ENCODE measurements at regions of chr22 and their contacts with region 1.

Region 1: DNA sequence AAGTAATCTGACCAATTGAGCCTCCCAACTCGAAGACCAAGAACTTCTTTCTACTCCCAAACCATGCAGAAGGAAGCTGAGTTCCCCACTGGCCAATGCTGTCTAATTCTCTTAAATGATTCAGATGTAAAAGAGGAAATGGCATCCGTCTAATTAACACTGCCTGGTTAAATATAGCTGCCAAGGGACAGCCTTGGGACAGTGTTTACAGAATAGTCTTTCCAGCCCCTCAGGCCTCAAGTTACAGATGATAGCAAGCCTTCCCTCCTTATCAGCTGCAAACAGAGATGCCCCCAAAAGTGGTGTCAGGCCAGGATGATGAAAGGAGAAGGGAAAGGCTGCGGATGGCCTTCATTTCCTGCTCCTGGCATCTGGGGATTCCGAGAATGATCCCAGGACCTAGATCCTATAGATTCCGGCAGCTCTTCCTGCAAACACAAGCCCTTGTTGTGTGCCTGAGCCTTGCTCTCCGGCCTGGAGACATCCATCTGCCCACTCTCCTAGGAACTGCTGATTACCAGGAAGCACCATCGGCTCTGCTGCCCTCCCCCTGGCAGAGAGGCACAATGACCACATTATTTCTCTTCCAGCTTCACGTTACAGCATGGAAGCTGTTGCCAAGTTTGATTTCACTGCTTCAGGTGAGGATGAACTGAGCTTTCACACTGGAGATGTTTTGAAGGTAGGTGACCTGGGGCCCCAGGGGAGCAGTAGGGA is 13.5 kb upstream of the TMA7B start:
- DNase-seq: no peak
- ATAC-seq: peak; percentile 49
- H3K4me3 ChIP-seq: peak overlapping the region; percentile 26
- H3K4me3 Mint-ChIP-seq: peak overlapping the region in 9 of 10 donors; percentile 65 to 82 (median 78)
- H3K27ac ChIP-seq: peak overlapping the region; percentile 79
- H3K27ac Mint-ChIP-seq: peak overlapping the region in 5 of 9 donors; percentile 77 to 98 (median 98)
- H3K4me1 ChIP-seq: peaks cover 81 to 99% of the 10 kb centered on the region in 2 donors
- H3K4me1 Mint-ChIP-seq: peaks cover 78 to 100% (median 96%) of the 10 kb centered on the region in 7 donors
- H3K27me3 ChIP-seq: no peaks in the 10 kb centered on the region
- H3K27me3 Mint-ChIP-seq: no peaks in the 10 kb centered on the region

Region 2: DNA sequence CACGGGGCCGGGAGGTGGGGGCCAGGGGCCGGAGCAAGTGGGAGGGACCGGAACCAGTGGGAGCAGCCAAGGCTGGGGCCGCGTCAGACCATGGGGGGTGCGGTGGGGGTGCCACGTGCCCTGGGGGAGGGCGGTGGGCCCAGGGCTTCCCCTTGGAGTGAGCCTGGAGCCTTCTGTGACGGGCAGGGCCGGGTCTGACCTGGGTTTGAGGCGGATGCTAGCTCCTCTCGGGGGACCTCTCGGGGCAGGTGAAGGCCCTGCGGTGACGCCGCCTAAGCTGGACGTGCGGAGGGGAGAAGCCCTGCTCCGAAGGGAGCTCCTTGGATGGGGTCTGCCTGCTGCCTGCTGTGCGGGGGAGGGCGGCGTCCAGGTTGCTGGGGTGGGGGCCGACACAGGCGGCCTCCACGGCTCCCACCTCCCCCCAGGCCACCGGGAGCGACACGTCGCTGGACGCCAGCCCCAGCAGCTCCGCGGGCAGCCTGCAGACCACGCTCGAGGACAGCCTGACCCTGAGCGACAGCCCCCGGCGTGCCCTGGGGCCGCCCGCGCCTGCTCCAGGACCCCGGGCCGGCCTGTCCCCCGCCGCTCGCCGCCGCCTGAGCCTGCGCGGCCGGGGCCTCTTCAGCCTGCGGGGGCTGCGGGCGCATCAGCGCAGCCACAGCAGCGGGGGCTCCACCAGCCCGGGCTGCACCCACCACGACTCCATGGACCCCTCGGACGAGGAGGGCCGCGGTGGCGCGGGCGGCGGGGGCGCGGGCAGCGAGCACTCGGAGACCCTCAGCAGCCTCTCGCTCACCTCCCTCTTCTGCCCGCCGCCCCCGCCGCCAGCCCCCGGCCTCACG is 261.1 kb before region 1 on chr22:
- CTCF ChIA-PET with region 1: no interaction called
- POLR2A ChIA-PET with region 1: no interaction called
- intact Hi-C with region 1: loop called in 1 of 2 experiments (anchors 10 kb)
- DNase-seq: no peak
- ATAC-seq: no peak
- H3K4me3 ChIP-seq: no peak overlapping the region
- H3K4me3 Mint-ChIP-seq: peak overlapping the region in 1 of 10 donors; percentile 33
- H3K27ac ChIP-seq: no peak overlapping the region
- H3K27ac Mint-ChIP-seq: no peak overlapping the region
- H3K4me1 ChIP-seq: no peaks in the 10 kb centered on the region
- H3K4me1 Mint-ChIP-seq: peaks cover 0 to 12% (median 5%) of the 10 kb centered on the region in 7 donors
- H3K27me3 ChIP-seq: no peaks in the 10 kb centered on the region
- H3K27me3 Mint-ChIP-seq: peaks cover 0 to 44% (median 5%) of the 10 kb centered on the region in 5 donors

Region 3: DNA sequence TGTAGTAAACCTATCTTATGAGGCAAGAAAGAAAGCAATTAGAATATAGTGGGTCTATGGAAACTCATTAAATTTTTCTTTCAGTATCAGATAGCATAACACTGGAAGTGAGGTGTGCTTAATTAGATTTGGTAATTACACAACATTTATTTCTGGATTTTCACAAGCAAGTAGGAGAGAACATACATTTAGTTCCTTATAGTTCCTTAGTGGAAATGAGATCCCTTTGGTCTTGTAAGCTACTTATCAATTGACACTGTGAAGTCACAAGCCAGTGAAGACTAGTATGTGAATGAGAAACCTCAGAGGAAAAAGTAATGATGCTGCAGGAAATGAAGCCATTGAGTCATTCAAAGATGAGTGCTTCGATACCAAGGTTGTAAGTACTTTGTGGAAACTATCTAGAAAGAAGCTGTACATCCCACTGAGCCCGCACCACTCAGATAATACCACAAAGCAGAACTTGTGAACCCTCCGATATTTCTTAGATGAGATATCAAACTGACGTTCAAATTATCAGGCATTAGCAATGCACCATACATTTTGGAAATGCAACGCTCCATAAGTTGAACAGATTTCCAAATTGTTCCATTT is 106.6 kb before region 1 on chr22:
- CTCF ChIA-PET with region 1: interaction called, 3 read pairs
- POLR2A ChIA-PET with region 1: no interaction called
- intact Hi-C with region 1: loop called in 1 of 2 experiments (anchors 10 kb)
- DNase-seq: peak in 5 of 9 donors; percentile 9 to 31 (median 12)
- ATAC-seq: peak; percentile 72
- H3K4me3 ChIP-seq: no peak overlapping the region
- H3K4me3 Mint-ChIP-seq: peak overlapping the region in 4 of 10 donors; percentile 1 to 18 (median 7)
- H3K27ac ChIP-seq: no peak overlapping the region
- H3K27ac Mint-ChIP-seq: no peak overlapping the region
- H3K4me1 ChIP-seq: peaks cover 5 to 6% of the 10 kb centered on the region in 2 donors
- H3K4me1 Mint-ChIP-seq: peaks cover 14 to 29% (median 17%) of the 10 kb centered on the region in 7 donors
- H3K27me3 ChIP-seq: no peaks in the 10 kb centered on the region
- H3K27me3 Mint-ChIP-seq: peaks cover 0 to 18% (median 0%) of the 10 kb centered on the region in 5 donors

Region 4: DNA sequence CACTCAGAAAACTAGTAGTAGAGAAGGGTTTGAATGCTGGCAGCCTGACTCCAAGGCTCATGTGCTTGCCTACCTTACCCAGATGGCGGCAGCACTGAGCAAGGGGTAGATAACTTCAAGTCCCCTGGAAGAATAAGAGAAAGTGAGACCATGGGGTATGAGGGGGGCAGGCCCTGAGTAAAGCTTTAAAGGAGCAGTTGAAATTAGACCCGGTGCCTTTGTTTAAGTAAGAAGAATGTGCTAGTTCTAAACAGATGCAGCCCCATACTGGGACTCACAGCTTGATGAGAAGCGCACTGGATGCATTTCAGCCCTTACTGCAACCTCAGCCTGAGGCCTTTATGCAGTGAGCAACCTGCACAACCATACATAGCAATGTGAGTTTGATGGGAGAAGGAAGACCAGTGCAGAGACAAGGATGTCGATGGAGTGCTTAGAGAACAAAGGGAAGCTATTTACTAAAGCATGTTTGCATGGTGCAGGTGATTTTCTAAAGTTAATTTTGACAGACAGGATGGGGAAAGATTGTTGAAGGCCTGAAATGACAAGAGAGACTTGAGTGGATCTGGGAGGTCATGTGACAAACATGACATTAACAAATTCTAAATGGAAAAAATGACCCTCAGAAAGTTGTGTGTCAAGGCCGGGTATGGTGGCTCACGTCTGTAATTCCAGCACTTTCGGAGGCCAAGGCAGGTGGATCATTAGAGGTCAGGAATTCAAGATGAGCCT is 13.6 kb before region 1 on chr22:
- CTCF ChIA-PET with region 1: interaction called, 6 read pairs
- POLR2A ChIA-PET with region 1: interaction called, 13 read pairs
- intact Hi-C with region 1: loop called in 1 of 2 experiments (anchors 2 kb)
- DNase-seq: peak in 5 of 9 donors; percentile 40 to 56 (median 52)
- ATAC-seq: peak; percentile 71
- H3K4me3 ChIP-seq: peak overlapping the region; percentile 22
- H3K4me3 Mint-ChIP-seq: peak overlapping the region; percentile 53 to 98 (median 80)
- H3K27ac ChIP-seq: peak overlapping the region; percentile 79
- H3K27ac Mint-ChIP-seq: peak overlapping the region in 6 of 9 donors; percentile 81 to 99 (median 97)
- H3K4me1 ChIP-seq: peaks cover 95 to 96% of the 10 kb centered on the region in 2 donors
- H3K4me1 Mint-ChIP-seq: peaks cover 50 to 55% (median 55%) of the 10 kb centered on the region in 7 donors
- H3K27me3 ChIP-seq: no peaks in the 10 kb centered on the region
- H3K27me3 Mint-ChIP-seq: no peaks in the 10 kb centered on the region

Region 5: DNA sequence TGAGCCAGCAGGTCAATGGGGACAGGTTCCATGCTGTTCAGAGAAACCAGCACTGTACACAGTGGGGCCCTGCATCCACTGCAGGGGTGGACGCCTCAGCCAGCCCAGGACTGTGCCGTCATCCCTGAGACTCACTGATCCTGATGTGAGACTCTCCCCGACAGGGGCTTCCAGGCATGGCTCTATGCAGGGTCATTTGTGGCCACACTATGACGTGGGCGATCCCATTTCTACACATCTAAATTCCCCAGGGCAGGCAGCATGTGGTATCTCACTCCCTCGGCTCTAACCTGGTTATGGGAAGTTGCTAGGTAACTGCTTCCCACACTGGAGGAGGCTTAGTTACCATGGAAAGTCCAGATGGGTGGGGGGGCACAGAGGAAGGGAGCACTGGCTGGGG is 33.9 kb after region 1 on chr22:
- CTCF ChIA-PET with region 1: no interaction called
- POLR2A ChIA-PET with region 1: no interaction called
- intact Hi-C with region 1: no loop called
- DNase-seq: no peak
- ATAC-seq: no peak
- H3K4me3 ChIP-seq: no peak overlapping the region
- H3K4me3 Mint-ChIP-seq: peak overlapping the region in 4 of 10 donors; percentile 23 to 60 (median 43)
- H3K27ac ChIP-seq: peak overlapping the region; percentile 45
- H3K27ac Mint-ChIP-seq: peak overlapping the region in 8 of 9 donors; percentile 75 to 94 (median 86)
- H3K4me1 ChIP-seq: peaks cover 0 to 19% of the 10 kb centered on the region in 2 donors
- H3K4me1 Mint-ChIP-seq: peaks cover 12 to 53% (median 34%) of the 10 kb centered on the region in 7 donors
- H3K27me3 ChIP-seq: no peaks in the 10 kb centered on the region
- H3K27me3 Mint-ChIP-seq: peaks cover 0 to 2% (median 0%) of the 10 kb centered on the region in 5 donors

Measured in naive thymus-derived CD4-positive, alpha-beta T cell (primary cell).